WTC11 (cell line): ENCODE measurements at regions of chr9 and their contacts with region 1.

Region 1: GRCh38 chr9:130701056-130702022 is 7.8 kb downstream of the EXOSC2 start:
- DNase-seq: peak; percentile 89
- ATAC-seq: peak; percentile 97
- H3K4me3 Mint-ChIP-seq: no peak overlapping the region
- H3K27ac Mint-ChIP-seq: peak overlapping the region; percentile 76
- H3K4me1 Mint-ChIP-seq: peaks cover 14% of the 10 kb centered on the region
- H3K27me3 Mint-ChIP-seq: no peaks in the 10 kb centered on the region
- CTCF ChIP-seq: peak; percentile 98

Region 2: DNA sequence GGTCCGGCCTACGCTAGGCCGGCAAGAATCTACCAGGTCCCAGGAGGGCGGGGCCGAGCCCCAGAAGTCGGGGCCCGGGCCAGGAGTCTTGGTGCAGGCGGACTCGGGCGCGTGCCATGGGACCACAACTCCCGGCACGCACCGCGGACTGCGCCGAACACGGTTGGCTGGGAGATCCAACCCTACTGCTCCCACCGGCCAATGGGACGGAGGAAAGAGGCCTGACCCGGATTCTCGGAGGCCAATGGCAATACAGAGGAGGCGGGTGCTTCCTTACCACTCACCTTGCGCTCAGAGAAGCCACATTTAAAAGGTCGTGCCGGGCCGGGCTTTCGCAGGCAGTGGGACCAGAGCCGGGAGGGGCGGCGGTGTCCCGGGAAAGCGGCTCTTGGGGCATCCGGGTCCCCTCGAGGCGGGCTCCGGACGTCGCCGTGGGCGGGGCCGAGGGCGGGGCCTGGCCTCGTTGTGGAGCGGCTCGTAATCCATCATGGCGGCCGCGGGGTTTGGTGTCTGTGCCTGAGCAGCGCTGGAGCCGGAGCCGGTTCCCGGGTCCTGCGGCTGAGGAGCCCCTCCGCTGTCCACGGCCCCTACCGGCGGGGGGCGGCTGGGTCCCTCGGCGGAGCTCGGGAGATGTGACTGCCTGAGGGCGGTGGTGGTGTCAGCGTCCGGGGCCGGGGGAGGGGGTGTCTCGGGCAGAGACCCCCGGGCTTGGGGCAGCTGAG is 11.4 kb after region 1 on chr9:
- CTCF ChIA-PET with region 1: interaction called, 11 read pairs
- POLR2A ChIA-PET with region 1: no interaction called
- DNase-seq: peak; percentile 99
- ATAC-seq: peak; percentile 97
- H3K4me3 Mint-ChIP-seq: peak overlapping the region; percentile 93
- H3K27ac Mint-ChIP-seq: peak overlapping the region; percentile 72
- H3K4me1 Mint-ChIP-seq: peaks cover 31% of the 10 kb centered on the region
- H3K27me3 Mint-ChIP-seq: no peaks in the 10 kb centered on the region
- CTCF ChIP-seq: no peak

Region 3: GRCh38 chr9:130857864-130858738 is 156.8 kb after region 1 on chr9:
- CTCF ChIA-PET with region 1: interaction called, 83 read pairs
- POLR2A ChIA-PET with region 1: no interaction called
- DNase-seq: no peak
- ATAC-seq: no peak
- H3K4me3 Mint-ChIP-seq: no peak overlapping the region
- H3K27ac Mint-ChIP-seq: peak overlapping the region; percentile 69
- H3K4me1 Mint-ChIP-seq: peaks cover 21% of the 10 kb centered on the region
- H3K27me3 Mint-ChIP-seq: no peaks in the 10 kb centered on the region
- CTCF ChIP-seq: no peak